Kidney (tissue), 22 donors: ENCODE measurements at regions of chr5 and their contacts with region 1.

Region 1: DNA sequence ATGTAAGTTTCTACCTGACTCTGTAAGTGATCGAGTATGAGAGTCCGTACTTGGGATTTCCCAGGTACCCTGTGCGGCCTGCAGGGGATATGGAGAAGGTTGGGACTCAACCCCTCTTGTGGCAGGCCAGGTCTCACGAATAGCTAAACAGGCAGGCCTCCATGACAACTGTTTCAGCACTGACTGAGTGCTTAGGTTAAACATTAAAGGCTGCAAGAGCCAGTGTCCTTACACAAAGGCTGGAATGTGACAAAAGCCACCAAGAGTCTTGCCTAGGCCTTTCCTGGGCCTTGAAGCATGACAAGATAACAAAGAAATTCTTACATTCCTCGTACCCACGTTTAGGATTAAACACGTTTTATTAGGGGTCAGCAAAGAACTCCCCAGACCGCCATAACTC is 58.6 kb downstream of the THBS4 start:
- DNase-seq: peak in 4 of 5 donors; percentile 69 to 92 (median 82)
- H3K4me3 ChIP-seq: no peak overlapping the region
- H3K27ac ChIP-seq: no peak overlapping the region
- H3K4me1 ChIP-seq: peaks cover 0 to 15% (median 5%) of the 10 kb centered on the region in 3 donors
- H3K27me3 ChIP-seq: no peaks in the 10 kb centered on the region
- CTCF ChIP-seq: no peak

Region 2: DNA sequence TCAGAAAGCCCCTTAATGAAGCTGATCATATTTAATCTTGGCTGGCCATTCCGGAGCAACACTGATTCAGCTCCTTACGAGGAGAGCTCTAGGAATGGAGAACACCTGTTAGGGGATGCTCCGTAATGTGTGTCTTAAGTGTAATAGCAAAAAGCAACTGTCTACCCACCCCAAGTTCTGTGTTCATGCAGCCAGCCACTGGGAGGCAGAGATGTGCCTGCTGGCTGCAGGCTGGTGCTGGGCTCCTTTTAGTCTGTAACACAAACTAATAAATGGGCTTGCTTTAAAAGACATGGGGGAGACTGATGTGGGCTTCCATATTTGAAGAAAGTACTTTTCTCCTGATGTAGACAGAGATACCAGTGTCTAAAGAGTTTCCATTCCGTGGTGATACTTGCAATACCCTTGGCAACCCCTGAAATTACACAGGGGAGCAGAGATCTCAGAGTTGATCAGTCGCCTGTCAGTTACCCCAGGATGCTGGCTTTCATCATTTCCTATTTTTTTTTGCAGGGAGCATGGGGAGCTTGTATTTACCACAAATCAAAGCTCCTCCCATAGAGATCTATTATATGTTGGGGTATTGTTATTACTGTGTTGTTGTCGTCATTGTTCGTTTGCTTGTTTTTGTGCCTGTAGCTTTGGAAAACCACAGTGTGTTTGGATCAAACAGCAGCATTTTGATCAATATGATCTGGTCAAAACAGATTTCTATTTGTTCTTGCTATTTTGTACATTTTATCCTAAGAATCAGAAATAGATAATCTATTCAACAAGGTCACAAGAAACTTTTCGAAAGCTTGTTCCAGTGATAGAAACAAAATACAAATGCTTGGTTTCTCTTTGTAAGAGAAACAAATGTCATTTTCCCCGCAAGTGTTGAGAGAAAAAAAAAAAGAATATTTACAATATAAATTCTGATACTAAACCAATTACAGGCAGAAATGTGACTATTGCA is 168.6 kb before region 1 on chr5:
- intact Hi-C with region 1: no loop called
- DNase-seq: no peak
- H3K4me3 ChIP-seq: no peak overlapping the region
- H3K27ac ChIP-seq: no peak overlapping the region
- H3K4me1 ChIP-seq: no peaks in the 10 kb centered on the region
- H3K27me3 ChIP-seq: no peaks in the 10 kb centered on the region
- CTCF ChIP-seq: no peak

Region 3: GRCh38 chr5:79990598-79991507 is 102.9 kb before region 1 on chr5 and contains the start of gene MTX3:
- intact Hi-C with region 1: no loop called
- DNase-seq: peak; percentile 92 to 97 (median 94)
- H3K4me3 ChIP-seq: peak within 1 kb of the TSS; percentile 71 to 90 (median 84)
- H3K27ac ChIP-seq: peak within 1 kb of the TSS in 1 of 2 donors; percentile 5
- H3K4me1 ChIP-seq: peaks cover 2 to 6% (median 5%) of the 10 kb centered on the region in 3 donors
- H3K27me3 ChIP-seq: no peaks in the 10 kb centered on the region
- CTCF ChIP-seq: no peak
- total RNA-seq, gene MTX3: 18.7 TPM

Region 4: GRCh38 chr5:80246001-80246758 is 152.4 kb after region 1 on chr5:
- intact Hi-C with region 1: no loop called
- DNase-seq: peak in 2 of 5 donors; percentile 63 to 83
- H3K4me3 ChIP-seq: no peak overlapping the region
- H3K27ac ChIP-seq: no peak overlapping the region
- H3K4me1 ChIP-seq: peaks cover 3 to 7% (median 5%) of the 10 kb centered on the region in 3 donors
- H3K27me3 ChIP-seq: no peaks in the 10 kb centered on the region
- CTCF ChIP-seq: no peak

Region 5: GRCh38 chr5:80296121-80296520 is 202.3 kb after region 1 on chr5:
- intact Hi-C with region 1: loop called (anchors 10 kb)
- DNase-seq: no peak
- H3K4me3 ChIP-seq: no peak overlapping the region
- H3K27ac ChIP-seq: no peak overlapping the region
- H3K4me1 ChIP-seq: no peaks in the 10 kb centered on the region
- H3K27me3 ChIP-seq: no peaks in the 10 kb centered on the region
- CTCF ChIP-seq: no peak